Activated CD8-positive, alpha-beta T cell treated with anti-CD3 and anti-CD28 coated beads for 36 hours (primary cell): ENCODE measurements at regions of chr3 and their contacts with region 1.

Region 1: GRCh38 chr3:72818092-72818773 is 30.0 kb downstream of the SHQ1 start:
- DNase-seq: no peak
- ATAC-seq: no peak
- H3K4me3 Mint-ChIP-seq: no peak overlapping the region
- H3K27ac Mint-ChIP-seq: no peak overlapping the region
- H3K4me1 Mint-ChIP-seq: peaks cover 23% of the 10 kb centered on the region
- H3K27me3 Mint-ChIP-seq: no peaks in the 10 kb centered on the region
- CTCF ChIP-seq: peak; percentile 32

Region 2: DNA sequence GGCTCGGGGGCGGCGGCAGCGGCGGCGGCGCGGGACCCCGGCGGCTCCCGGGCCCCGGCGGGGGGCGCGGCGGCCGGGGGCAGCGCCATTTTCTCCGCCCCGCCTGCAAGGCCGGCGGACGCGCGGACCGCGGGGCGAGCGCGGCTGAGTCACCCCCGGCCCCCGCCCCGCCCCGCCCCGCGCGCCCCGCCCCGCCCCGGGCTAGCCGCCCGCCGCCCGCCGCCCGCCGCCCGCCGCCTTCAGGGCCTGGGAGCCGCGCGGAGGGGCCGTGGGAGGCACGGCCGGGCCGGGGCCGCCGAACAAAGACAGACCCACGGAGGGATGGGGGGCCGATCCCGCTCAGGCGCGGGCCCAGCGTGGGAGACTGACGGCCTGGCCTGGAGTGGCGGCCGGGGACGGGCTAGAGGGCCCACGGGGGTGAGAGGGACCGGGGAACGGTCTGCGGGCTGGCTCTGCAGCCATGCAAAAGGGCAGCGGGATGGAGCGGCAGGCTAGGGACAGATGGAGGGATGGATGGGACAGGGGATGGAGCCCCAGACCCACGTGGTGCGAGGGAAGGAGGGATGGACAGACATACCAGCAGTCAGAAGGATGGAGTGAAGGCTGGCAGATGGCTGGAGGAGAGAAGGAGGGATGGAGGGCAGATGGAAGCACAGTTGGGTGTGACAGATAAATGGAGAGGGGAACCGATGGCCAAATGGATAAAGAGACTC is 1092.8 kb before region 1 on chr3 and contains the start of gene EIF4E3:
- CTCF ChIA-PET with region 1: interaction called, 9 read pairs
- POLR2A ChIA-PET with region 1: no interaction called
- intact Hi-C with region 1: loop called (anchors 10 kb)
- DNase-seq: peak; percentile 31
- ATAC-seq: peak; percentile 43
- H3K4me3 Mint-ChIP-seq: peak within 1 kb of the TSS; percentile 99
- H3K27ac Mint-ChIP-seq: peak within 1 kb of the TSS; percentile 98
- H3K4me1 Mint-ChIP-seq: peaks cover 64% of the 10 kb centered on the region
- H3K27me3 Mint-ChIP-seq: no peaks in the 10 kb centered on the region
- CTCF ChIP-seq: no peak
- total RNA-seq, gene EIF4E3: 29.3 to 30.4 TPM

Region 3: GRCh38 chr3:72265256-72266015 is 552.8 kb before region 1 on chr3:
- CTCF ChIA-PET with region 1: interaction called, 3 read pairs
- POLR2A ChIA-PET with region 1: no interaction called
- intact Hi-C with region 1: loop called (anchors 10 kb)
- DNase-seq: no peak
- ATAC-seq: peak; percentile 75
- H3K4me3 Mint-ChIP-seq: no peak overlapping the region
- H3K27ac Mint-ChIP-seq: peak overlapping the region; percentile 64
- H3K4me1 Mint-ChIP-seq: peaks cover 40% of the 10 kb centered on the region
- H3K27me3 Mint-ChIP-seq: peaks cover 3% of the 10 kb centered on the region
- CTCF ChIP-seq: no peak

Region 4: GRCh38 chr3:72738752-72739530 is 79.3 kb before region 1 on chr3:
- CTCF ChIA-PET with region 1: interaction called, 20 read pairs
- POLR2A ChIA-PET with region 1: no interaction called
- intact Hi-C with region 1: no loop called
- DNase-seq: peak; percentile 80
- ATAC-seq: peak; percentile 96
- H3K4me3 Mint-ChIP-seq: peak overlapping the region; percentile 70
- H3K27ac Mint-ChIP-seq: peak overlapping the region; percentile 68
- H3K4me1 Mint-ChIP-seq: peaks cover 14% of the 10 kb centered on the region
- H3K27me3 Mint-ChIP-seq: no peaks in the 10 kb centered on the region
- CTCF ChIP-seq: no peak

Region 5: DNA sequence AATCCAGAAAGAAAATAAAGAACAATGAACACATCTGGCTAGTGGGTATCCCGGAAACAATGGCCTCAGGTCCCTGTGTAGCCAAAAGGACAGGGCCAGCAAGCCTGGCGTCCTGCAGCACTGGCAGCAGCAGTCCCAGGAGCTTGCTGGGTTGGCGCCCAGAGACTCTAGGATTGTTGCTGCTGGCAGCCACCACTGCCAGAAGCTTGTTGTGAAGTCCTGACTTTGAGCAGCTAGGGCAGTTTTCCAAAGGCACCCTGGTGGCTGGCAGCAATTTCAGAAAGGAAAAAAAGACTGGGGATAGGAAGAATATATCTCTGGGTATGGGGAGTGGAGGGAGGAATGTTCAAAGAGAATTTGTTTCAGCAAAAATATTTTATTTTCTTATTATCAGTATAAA is 18.7 kb after region 1 on chr3:
- CTCF ChIA-PET with region 1: interaction called, 15 read pairs
- POLR2A ChIA-PET with region 1: no interaction called
- intact Hi-C with region 1: no loop called
- DNase-seq: no peak
- ATAC-seq: no peak
- H3K4me3 Mint-ChIP-seq: no peak overlapping the region
- H3K27ac Mint-ChIP-seq: no peak overlapping the region
- H3K4me1 Mint-ChIP-seq: peaks cover 3% of the 10 kb centered on the region
- H3K27me3 Mint-ChIP-seq: no peaks in the 10 kb centered on the region
- CTCF ChIP-seq: no peak

Region 6: DNA sequence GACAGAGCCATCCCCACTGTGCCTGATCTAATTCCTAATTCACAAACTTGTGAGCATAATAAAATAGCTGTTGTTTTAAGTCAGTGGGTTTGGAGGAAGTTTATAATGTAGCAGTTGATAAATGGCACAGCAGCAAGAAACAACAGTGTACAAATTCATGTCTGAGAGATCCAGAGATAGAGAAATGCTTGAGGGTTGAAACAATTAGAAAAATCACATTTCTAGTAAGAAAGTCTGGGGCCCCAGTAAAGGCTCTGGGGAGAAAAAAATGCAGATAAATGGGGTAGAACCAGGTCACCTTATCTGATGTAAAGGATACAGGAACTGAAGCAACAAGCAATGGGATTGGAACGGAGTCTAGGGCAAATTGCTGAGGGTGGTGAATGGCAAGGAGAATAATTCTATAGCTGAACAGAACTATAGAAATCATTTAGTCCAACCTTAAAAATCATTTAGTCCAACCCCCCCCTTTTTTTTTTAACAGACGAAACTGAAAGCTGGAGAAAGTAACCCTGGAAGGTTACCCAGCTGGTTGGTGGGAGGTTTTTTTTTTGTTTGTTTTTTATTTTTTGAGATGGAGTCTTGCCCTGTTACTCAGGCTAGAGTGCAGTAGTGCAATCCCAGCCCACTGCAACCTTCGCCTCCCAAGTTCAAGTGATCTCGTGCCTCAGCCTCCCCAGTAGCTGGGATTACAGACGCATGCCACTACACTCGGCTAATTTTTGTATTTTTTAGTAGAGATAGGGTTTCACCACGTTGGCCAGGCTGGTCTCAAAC is 44.3 kb after region 1 on chr3:
- CTCF ChIA-PET with region 1: no interaction called
- POLR2A ChIA-PET with region 1: no interaction called
- intact Hi-C with region 1: no loop called
- DNase-seq: no peak
- ATAC-seq: no peak
- H3K4me3 Mint-ChIP-seq: no peak overlapping the region
- H3K27ac Mint-ChIP-seq: no peak overlapping the region
- H3K4me1 Mint-ChIP-seq: no peaks in the 10 kb centered on the region
- H3K27me3 Mint-ChIP-seq: no peaks in the 10 kb centered on the region
- CTCF ChIP-seq: no peak